HEK293 (cell line): ENCODE measurements at regions of chr19 and their contacts with region 1.

Region 1: DNA sequence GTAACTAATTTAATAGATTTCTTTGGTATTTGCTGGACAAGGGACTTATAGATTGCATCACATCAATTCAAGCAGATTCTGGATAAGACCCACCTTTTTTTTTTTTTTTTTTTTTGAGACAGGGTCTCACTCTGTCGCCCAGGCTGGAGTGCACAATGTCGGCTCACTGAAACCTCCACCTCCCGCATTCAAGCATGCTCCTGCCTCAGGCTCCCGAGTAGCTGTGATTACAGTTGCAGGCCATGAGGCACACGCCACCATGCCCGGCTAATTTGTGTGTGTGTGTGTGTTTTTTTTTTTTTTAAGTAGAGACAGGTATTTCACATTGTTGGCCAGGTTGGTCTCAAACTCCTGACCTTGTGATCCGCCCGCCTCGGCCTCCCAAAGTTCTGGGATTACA is 4.2 kb upstream of the PRODH2 start:
- H3K4me3 ChIP-seq: no peak overlapping the region
- H3K27ac ChIP-seq: no peak overlapping the region
- H3K4me1 ChIP-seq: peaks cover 4% of the 10 kb centered on the region
- CTCF ChIP-seq: no peak

Region 2: GRCh38 chr19:35801828-35802227 is 15.0 kb before region 1 on chr19:
- CTCF ChIA-PET with region 1: interaction called, 15 read pairs
- POLR2A ChIA-PET with region 1: no interaction called
- H3K4me3 ChIP-seq: no peak overlapping the region
- H3K27ac ChIP-seq: no peak overlapping the region
- H3K4me1 ChIP-seq: no peaks in the 10 kb centered on the region
- CTCF ChIP-seq: no peak

Region 3: DNA sequence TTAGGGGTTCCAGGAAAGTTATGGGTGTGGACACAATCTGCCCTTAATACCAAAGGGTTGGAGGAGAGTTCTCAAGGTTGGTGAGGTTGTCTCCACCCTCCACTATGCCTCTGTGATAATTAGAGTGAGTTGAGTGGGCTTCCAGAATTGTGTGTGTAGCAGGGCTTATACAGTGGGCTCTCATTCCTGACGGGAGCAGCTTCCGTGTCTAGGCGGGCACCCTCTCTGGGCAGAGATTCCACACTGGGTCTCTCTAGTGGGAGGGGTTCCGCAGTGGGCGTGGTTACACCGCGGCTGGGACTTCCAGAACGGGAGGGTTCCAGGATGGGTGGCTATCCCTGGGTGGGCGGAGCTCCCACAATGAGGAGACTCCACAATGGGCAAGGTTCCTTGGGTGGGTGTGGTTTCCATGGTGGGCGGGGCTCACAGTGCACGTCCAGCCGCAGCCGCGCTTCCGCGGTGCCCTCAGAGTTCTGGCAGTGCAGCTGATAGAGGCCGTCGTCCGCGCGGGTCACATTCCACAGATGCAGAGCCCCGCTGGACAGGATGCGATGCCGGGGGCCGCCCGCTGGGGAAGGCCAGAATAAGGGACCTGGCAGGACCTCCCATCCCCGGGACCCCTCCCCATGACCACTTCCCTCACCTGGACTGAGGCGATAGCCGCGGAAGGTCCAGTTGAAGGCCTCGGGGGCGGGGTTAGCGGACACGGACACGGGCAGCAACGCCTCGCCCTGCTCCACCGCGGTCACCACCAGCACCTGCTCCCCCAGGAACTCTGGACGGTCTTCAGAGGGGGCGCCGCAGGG is 27.0 kb after region 1 on chr19:
- CTCF ChIA-PET with region 1: interaction called, 10 read pairs
- POLR2A ChIA-PET with region 1: interaction called, 3 read pairs
- H3K4me3 ChIP-seq: no peak overlapping the region
- H3K27ac ChIP-seq: no peak overlapping the region
- H3K4me1 ChIP-seq: peaks cover 19% of the 10 kb centered on the region
- CTCF ChIP-seq: no peak

Region 4: GRCh38 chr19:35848919-35849505 is 32.2 kb after region 1 on chr19:
- CTCF ChIA-PET with region 1: interaction called, 10 read pairs
- POLR2A ChIA-PET with region 1: interaction called, 3 read pairs
- H3K4me3 ChIP-seq: no peak overlapping the region
- H3K27ac ChIP-seq: no peak overlapping the region
- H3K4me1 ChIP-seq: peaks cover 18% of the 10 kb centered on the region
- CTCF ChIP-seq: no peak

Region 5: GRCh38 chr19:35899547-35900214 is 82.8 kb after region 1 on chr19:
- CTCF ChIA-PET with region 1: no interaction called
- POLR2A ChIA-PET with region 1: no interaction called
- H3K4me3 ChIP-seq: peak overlapping the region; percentile 61
- H3K27ac ChIP-seq: peak overlapping the region; percentile 94
- H3K4me1 ChIP-seq: peaks cover 14% of the 10 kb centered on the region
- CTCF ChIP-seq: peak; percentile 53

Region 6: GRCh38 chr19:35931161-35931873 is 114.5 kb after region 1 on chr19:
- CTCF ChIA-PET with region 1: interaction called, 13 read pairs
- POLR2A ChIA-PET with region 1: interaction called, 8 read pairs
- H3K4me3 ChIP-seq: peak overlapping the region; percentile 12
- H3K27ac ChIP-seq: peak overlapping the region; percentile 33; the same call in 1 of the 2 replicates
- H3K4me1 ChIP-seq: peaks cover 11% of the 10 kb centered on the region
- CTCF ChIP-seq: peak; percentile 100